WTC11 (cell line): ENCODE measurements at regions of chr16 and their contacts with region 1.

Region 1: GRCh38 chr16:29961479-29962343 is at the start of gene TMEM219:
- DNase-seq: peak; percentile 86
- ATAC-seq: peak; percentile 92
- H3K4me3 Mint-ChIP-seq: peak within 1 kb of the TSS; percentile 86
- H3K27ac Mint-ChIP-seq: peak within 1 kb of the TSS; percentile 57; the same call in 1 of the 2 replicates
- H3K4me1 Mint-ChIP-seq: peaks cover 13% of the 10 kb centered on the region
- H3K27me3 Mint-ChIP-seq: peaks cover 12% of the 10 kb centered on the region
- CTCF ChIP-seq: no peak
- total RNA-seq, gene TMEM219: 69.6 to 87.6 TPM (median 78.0 TPM) in 3 replicates

Region 2: GRCh38 chr16:29815793-29816693 is 145.7 kb before region 1 on chr16 and contains the start of gene PAGR1:
- CTCF ChIA-PET with region 1: no interaction called
- POLR2A ChIA-PET with region 1: no interaction called
- DNase-seq: peak; percentile 98
- ATAC-seq: peak; percentile 56
- H3K4me3 Mint-ChIP-seq: peak within 1 kb of the TSS; percentile 94
- H3K27ac Mint-ChIP-seq: peak within 1 kb of the TSS; percentile 100
- H3K4me1 Mint-ChIP-seq: peaks cover 56% of the 10 kb centered on the region
- H3K27me3 Mint-ChIP-seq: no peaks in the 10 kb centered on the region; the same call in 1 of the 2 replicates
- CTCF ChIP-seq: peak; percentile 81
- total RNA-seq, gene PAGR1: 60.1 to 69.0 TPM (median 66.8 TPM) in 3 replicates

Region 3: DNA sequence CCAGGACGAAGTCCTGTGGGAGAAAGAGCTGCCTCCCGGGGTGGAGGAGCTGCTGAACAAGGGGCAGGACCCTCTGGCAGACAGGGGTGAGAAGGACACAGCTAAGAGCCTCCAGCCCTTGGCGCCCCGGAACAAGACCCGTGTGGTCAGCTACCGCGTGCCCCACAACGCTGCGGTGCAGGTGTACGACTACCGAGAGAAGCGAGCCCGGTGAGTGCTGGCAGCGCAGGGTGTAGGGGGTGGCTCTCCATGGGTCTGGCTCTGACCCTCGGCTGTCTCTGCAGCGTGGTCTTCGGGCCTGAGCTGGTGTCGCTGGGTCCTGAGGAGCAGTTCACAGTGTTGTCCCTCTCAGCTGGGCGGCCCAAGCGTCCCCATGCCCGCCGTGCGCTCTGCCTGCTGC is 120.1 kb before region 1 on chr16:
- CTCF ChIA-PET with region 1: no interaction called
- POLR2A ChIA-PET with region 1: no interaction called
- DNase-seq: no peak
- ATAC-seq: no peak
- H3K4me3 Mint-ChIP-seq: no peak overlapping the region
- H3K27ac Mint-ChIP-seq: no peak overlapping the region
- H3K4me1 Mint-ChIP-seq: no peaks in the 10 kb centered on the region
- H3K27me3 Mint-ChIP-seq: no peaks in the 10 kb centered on the region; the same call in 1 of the 2 replicates
- CTCF ChIP-seq: no peak

Region 4: GRCh38 chr16:29926005-29926710 is 35.6 kb before region 1 on chr16 and contains the start of gene KCTD13:
- CTCF ChIA-PET with region 1: interaction called, 10 read pairs
- POLR2A ChIA-PET with region 1: interaction called, 6 read pairs
- DNase-seq: peak; percentile 91
- ATAC-seq: peak; percentile 95
- H3K4me3 Mint-ChIP-seq: peak within 1 kb of the TSS; percentile 93
- H3K27ac Mint-ChIP-seq: peak within 1 kb of the TSS; percentile 97
- H3K4me1 Mint-ChIP-seq: peaks cover 18% of the 10 kb centered on the region
- H3K27me3 Mint-ChIP-seq: no peaks in the 10 kb centered on the region; the same call in 1 of the 2 replicates
- CTCF ChIP-seq: no peak
- total RNA-seq, gene KCTD13: 18.5 to 20.9 TPM (median 19.4 TPM) in 3 replicates

Region 5: GRCh38 chr16:29943846-29944669 is 17.7 kb before region 1 on chr16:
- CTCF ChIA-PET with region 1: interaction called, 18 read pairs
- POLR2A ChIA-PET with region 1: interaction called, 5 read pairs
- DNase-seq: peak; percentile 19
- ATAC-seq: peak; percentile 94
- H3K4me3 Mint-ChIP-seq: no peak overlapping the region
- H3K27ac Mint-ChIP-seq: peak overlapping the region; percentile 11
- H3K4me1 Mint-ChIP-seq: peaks cover 12% of the 10 kb centered on the region
- H3K27me3 Mint-ChIP-seq: peaks cover 11% of the 10 kb centered on the region
- CTCF ChIP-seq: no peak

Region 6: GRCh38 chr16:29973384-29974246 is 11.9 kb after region 1 on chr16 and contains the start of gene TAOK2:
- CTCF ChIA-PET with region 1: interaction called, 25 read pairs
- POLR2A ChIA-PET with region 1: interaction called, 17 read pairs
- DNase-seq: peak; percentile 100
- ATAC-seq: peak; percentile 97
- H3K4me3 Mint-ChIP-seq: peak within 1 kb of the TSS; percentile 92
- H3K27ac Mint-ChIP-seq: peak within 1 kb of the TSS; percentile 82
- H3K4me1 Mint-ChIP-seq: peaks cover 27% of the 10 kb centered on the region
- H3K27me3 Mint-ChIP-seq: peaks cover 21% of the 10 kb centered on the region
- CTCF ChIP-seq: no peak
- total RNA-seq, gene TAOK2: 38.3 to 42.4 TPM (median 39.2 TPM) in 3 replicates

Region 7: DNA sequence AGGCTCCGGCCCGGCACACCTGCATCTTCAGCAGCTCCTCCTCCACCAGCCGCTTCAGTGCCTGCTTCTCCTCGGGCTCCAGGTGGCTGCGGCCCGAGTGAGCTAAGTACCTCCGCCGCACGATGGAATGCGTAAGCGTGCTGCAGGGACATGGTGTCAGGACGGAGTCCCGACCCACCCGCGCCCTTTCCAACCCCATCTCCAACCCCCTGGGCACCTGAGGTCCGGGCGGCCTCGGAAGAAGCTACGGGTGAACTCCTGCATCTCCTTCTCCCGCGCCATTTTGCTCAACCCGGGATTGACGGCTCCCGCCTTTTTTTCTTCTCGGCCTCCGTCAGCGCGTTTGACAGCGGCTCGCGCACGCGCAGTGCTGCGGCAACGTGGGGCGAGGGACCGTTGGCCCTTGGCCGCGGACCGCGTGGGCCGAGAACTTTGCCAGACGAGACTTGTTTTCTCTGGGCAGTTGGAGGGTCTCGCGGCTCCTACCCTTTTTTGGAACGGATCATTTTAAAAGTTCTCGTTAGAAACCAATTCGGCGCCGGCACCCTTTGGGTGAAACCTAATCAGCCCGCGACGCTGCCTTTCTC is 33.7 kb after region 1 on chr16 and contains the start of gene HIRIP3:
- CTCF ChIA-PET with region 1: no interaction called
- POLR2A ChIA-PET with region 1: no interaction called
- DNase-seq: peak; percentile 77
- ATAC-seq: peak; percentile 31
- H3K4me3 Mint-ChIP-seq: peak within 1 kb of the TSS; percentile 94
- H3K27ac Mint-ChIP-seq: peak within 1 kb of the TSS; percentile 97
- H3K4me1 Mint-ChIP-seq: peaks cover 17% of the 10 kb centered on the region
- H3K27me3 Mint-ChIP-seq: no peaks in the 10 kb centered on the region
- CTCF ChIP-seq: no peak
- total RNA-seq, gene HIRIP3: 18.9 to 21.2 TPM (median 21.1 TPM) in 3 replicates

Region 8: GRCh38 chr16:30149250-30149930 is 187.7 kb after region 1 on chr16:
- CTCF ChIA-PET with region 1: no interaction called
- POLR2A ChIA-PET with region 1: no interaction called
- DNase-seq: no peak
- ATAC-seq: no peak
- H3K4me3 Mint-ChIP-seq: no peak overlapping the region
- H3K27ac Mint-ChIP-seq: no peak overlapping the region
- H3K4me1 Mint-ChIP-seq: no peaks in the 10 kb centered on the region
- H3K27me3 Mint-ChIP-seq: peaks cover 35% of the 10 kb centered on the region
- CTCF ChIP-seq: no peak